B cell (primary cell): ENCODE measurements at regions of chr17 and their contacts with region 1.

Region 1: DNA sequence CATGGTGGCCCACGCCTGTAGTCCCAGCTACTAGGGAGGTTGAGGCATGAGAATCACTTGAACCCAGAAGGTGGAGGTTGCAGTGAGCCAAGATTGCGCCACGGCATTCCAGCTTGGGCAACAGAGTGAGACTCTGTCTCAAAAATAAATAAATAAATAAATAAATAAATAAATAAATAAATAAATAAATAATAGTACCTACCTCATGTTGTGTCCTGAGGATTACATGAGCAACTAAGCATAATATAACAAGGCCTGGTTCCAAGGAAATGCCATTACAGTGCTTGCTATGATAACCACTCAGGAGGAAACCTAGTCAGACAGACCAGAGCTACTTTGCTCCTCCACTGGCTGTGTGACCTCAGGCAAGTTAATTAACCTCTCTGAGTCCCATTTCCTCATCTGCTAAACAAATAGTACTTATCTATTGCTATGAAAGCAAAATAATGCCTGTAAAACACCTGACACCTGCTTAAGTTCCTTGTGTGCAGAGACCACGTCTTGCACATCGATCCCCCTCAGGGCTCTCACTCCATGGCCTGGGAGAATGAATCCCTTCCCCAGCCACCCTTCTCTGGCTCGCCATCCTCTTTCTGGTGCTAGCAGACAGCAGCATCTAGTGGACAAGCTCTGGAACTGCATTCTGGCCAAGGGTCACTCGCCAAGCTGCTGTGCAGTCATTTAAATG is 7.5 kb downstream of the EPOP start:
- DNase-seq: peak; percentile 72
- ATAC-seq: peak; percentile 76
- H3K4me3 ChIP-seq: no peak overlapping the region
- H3K4me3 Mint-ChIP-seq: no peak overlapping the region
- H3K27ac ChIP-seq: no peak overlapping the region
- H3K27ac Mint-ChIP-seq: no peak overlapping the region
- H3K4me1 ChIP-seq: peaks cover 3 to 4% of the 10 kb centered on the region in 2 donors
- H3K4me1 Mint-ChIP-seq: peaks cover 7% of the 10 kb centered on the region
- H3K27me3 ChIP-seq: peaks cover 0 to 72% (median 29%) of the 10 kb centered on the region in 4 experiments
- H3K27me3 Mint-ChIP-seq: peaks cover 64% of the 10 kb centered on the region
- CTCF ChIP-seq: peak; percentile 98

Region 2: DNA sequence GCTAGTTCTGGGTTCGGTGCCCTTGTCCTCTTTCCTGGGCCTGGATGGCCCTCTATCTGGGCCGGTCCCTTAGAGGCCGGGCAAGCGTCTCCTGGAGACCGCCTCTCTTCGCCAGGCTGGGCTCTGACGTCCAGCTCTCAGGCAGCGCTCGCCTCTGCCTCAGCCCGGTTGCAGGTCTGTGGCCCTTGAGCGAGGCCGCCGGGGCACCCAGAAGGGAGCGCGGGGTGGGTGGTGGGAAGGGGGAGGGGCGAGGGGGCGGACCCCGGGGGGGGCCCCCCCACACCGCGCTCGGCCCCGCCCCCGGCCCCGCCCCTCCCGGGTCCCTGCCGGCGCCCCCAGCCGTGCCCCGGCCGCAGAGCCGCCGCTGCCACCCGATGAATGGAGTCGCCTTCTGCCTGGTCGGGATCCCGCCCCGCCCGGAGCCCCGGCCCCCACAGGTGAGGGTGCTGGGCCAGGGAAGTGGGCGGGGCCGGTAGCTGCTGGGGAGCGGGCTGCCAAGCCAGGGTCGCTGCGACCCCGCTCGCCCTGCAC is 239.1 kb before region 1 on chr17 and contains the start of gene ARHGAP23:
- CTCF ChIA-PET with region 1: interaction called, 6 read pairs
- POLR2A ChIA-PET with region 1: no interaction called
- intact Hi-C with region 1: loop called (anchors 5 kb)
- DNase-seq: peak; percentile 52
- ATAC-seq: peak; percentile 60
- H3K4me3 ChIP-seq: peak within 1 kb of the TSS; percentile 5 to 65 (median 58)
- H3K4me3 Mint-ChIP-seq: peak within 1 kb of the TSS; percentile 83
- H3K27ac ChIP-seq: peak within 1 kb of the TSS in 1 of 2 donors; percentile 9
- H3K27ac Mint-ChIP-seq: peak within 1 kb of the TSS; percentile 38
- H3K4me1 ChIP-seq: peaks cover 9 to 19% of the 10 kb centered on the region in 2 donors
- H3K4me1 Mint-ChIP-seq: peaks cover 21% of the 10 kb centered on the region
- H3K27me3 ChIP-seq: peaks cover 0 to 56% (median 23%) of the 10 kb centered on the region in 4 experiments
- H3K27me3 Mint-ChIP-seq: peaks cover 41% of the 10 kb centered on the region
- CTCF ChIP-seq: no peak
- total RNA-seq, gene ARHGAP23: 0.12 and 0.83 TPM in 2 replicates

Region 3: DNA sequence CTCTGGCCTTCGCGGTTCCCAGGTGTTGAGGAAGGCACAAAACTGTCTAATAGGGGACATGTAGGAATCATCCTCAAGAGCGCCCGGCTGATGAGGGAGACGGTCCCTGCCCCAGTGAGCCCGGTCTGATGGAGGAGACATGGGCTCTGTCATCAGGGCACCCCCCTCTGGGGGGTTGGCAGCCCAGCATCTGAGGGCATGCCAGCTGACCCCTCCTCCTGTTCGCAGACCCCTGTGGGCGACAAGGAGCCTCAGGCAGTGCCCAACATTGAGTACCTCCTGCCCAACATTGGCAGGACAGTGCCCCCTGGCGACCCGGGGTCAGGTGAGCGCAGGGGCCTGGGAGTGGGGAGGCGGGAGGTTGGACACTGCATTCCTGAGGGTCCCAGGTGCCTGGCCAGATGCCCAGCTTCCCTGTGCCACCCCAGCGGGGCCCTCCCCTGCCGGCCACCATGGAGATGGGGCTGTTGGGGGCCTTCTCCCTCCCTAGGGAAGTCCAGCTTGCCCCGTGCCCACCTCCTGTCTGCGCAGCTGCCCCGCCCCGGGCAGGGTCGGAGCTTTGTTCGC is 169.0 kb before region 1 on chr17:
- CTCF ChIA-PET with region 1: interaction called, 18 read pairs
- POLR2A ChIA-PET with region 1: no interaction called
- intact Hi-C with region 1: no loop called
- DNase-seq: no peak
- ATAC-seq: no peak
- H3K4me3 ChIP-seq: no peak overlapping the region
- H3K4me3 Mint-ChIP-seq: no peak overlapping the region
- H3K27ac ChIP-seq: no peak overlapping the region
- H3K27ac Mint-ChIP-seq: no peak overlapping the region
- H3K4me1 ChIP-seq: no peaks in the 10 kb centered on the region
- H3K4me1 Mint-ChIP-seq: no peaks in the 10 kb centered on the region
- H3K27me3 ChIP-seq: no peaks in the 10 kb centered on the region
- H3K27me3 Mint-ChIP-seq: peaks cover 6% of the 10 kb centered on the region
- CTCF ChIP-seq: no peak

Region 4: DNA sequence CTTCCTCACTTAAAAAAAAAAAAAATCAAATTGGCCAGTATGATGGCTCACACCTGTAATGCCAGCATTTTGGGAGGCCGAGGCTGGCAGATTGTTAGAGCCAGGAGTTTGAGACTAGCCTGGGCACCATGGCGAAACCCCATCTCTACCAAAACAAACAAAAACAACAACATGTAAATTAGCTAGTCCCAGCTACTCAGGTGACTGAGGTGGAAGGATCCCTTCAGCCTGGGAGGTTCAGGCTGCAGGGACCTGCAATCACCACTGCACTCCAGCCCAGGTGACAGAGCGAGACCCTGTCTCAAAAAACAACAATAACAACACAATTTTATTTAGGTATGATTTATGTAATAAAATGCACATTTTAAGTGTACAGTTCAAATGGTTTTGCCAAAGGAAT is 13.9 kb after region 1 on chr17:
- CTCF ChIA-PET with region 1: interaction called, 30 read pairs
- POLR2A ChIA-PET with region 1: interaction called, 4 read pairs
- intact Hi-C with region 1: no loop called
- DNase-seq: no peak
- ATAC-seq: no peak
- H3K4me3 ChIP-seq: no peak overlapping the region
- H3K4me3 Mint-ChIP-seq: no peak overlapping the region
- H3K27ac ChIP-seq: no peak overlapping the region
- H3K27ac Mint-ChIP-seq: no peak overlapping the region
- H3K4me1 ChIP-seq: peaks cover 9 to 12% of the 10 kb centered on the region in 2 donors
- H3K4me1 Mint-ChIP-seq: peaks cover 7% of the 10 kb centered on the region
- H3K27me3 ChIP-seq: peaks cover 0 to 8% (median 2%) of the 10 kb centered on the region in 4 experiments
- H3K27me3 Mint-ChIP-seq: peaks cover 18% of the 10 kb centered on the region
- CTCF ChIP-seq: no peak

Region 5: GRCh38 chr17:38735161-38735997 is 68.1 kb after region 1 on chr17:
- CTCF ChIA-PET with region 1: interaction called, 34 read pairs
- POLR2A ChIA-PET with region 1: no interaction called
- intact Hi-C with region 1: no loop called
- DNase-seq: peak; percentile 77
- ATAC-seq: peak; percentile 34
- H3K4me3 ChIP-seq: no peak overlapping the region
- H3K4me3 Mint-ChIP-seq: no peak overlapping the region
- H3K27ac ChIP-seq: no peak overlapping the region
- H3K27ac Mint-ChIP-seq: no peak overlapping the region
- H3K4me1 ChIP-seq: peaks cover 4 to 25% of the 10 kb centered on the region in 2 donors
- H3K4me1 Mint-ChIP-seq: peaks cover 34% of the 10 kb centered on the region
- H3K27me3 ChIP-seq: no peaks in the 10 kb centered on the region
- H3K27me3 Mint-ChIP-seq: peaks cover 6% of the 10 kb centered on the region
- CTCF ChIP-seq: peak; percentile 85